CD14-positive monocyte (primary cell): ENCODE measurements at regions of chr7 and their contacts with region 1.

Region 1: GRCh38 chr7:135977007-135977741 is at the start of gene MTPN:
- DNase-seq: peak; percentile 97 to 99 (median 98)
- H3K4me3 ChIP-seq: peak within 1 kb of the TSS; percentile 63 to 99 (median 99)
- H3K4me3 Mint-ChIP-seq: peak within 1 kb of the TSS; percentile 90 to 99
- H3K27ac ChIP-seq: peak within 1 kb of the TSS; percentile 94
- H3K27ac Mint-ChIP-seq: peak within 1 kb of the TSS; percentile 93 to 97 (median 95)
- H3K4me1 ChIP-seq: peaks cover 77 to 88% of the 10 kb centered on the region in 2 donors
- H3K4me1 Mint-ChIP-seq: peaks cover 76% of the 10 kb centered on the region
- H3K27me3 ChIP-seq: no peaks in the 10 kb centered on the region
- H3K27me3 Mint-ChIP-seq: peaks cover 0 to 1% (median 1%) of the 10 kb centered on the region in 3 donors
- CTCF ChIP-seq: no peak
- polyA plus RNA-seq, gene MTPN: 73.6 to 156 (median 142) TPM

Region 2: DNA sequence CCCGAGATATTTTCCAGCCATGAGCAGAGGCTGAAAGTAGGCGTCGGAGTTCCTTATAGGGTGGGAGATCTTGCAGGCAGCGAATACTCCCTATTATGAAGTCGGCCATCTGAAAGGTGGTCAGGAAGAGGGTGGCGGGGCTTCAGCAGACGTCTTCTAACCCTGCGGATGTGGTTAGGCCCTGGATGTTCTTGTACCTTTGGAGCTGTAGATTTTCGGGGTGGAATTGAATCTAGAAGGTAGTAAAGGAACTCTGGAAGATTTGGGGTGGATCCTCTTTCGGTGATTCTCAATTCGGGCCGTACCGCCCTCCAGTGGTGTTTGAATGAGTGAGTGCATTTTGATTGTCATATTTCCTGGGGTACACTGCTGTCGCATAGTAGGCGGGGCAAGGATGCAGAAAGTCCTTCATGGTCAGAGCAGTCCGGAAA is 418.8 kb before region 1 on chr7:
- intact Hi-C with region 1: loop called in 1 of 2 experiments (anchors 5 kb)
- DNase-seq: peak; percentile 57 to 63 (median 59)
- H3K4me3 ChIP-seq: peak overlapping the region; percentile 80 to 96 (median 89)
- H3K4me3 Mint-ChIP-seq: no peak overlapping the region
- H3K27ac ChIP-seq: peak overlapping the region; percentile 84 to 98
- H3K27ac Mint-ChIP-seq: no peak overlapping the region
- H3K4me1 ChIP-seq: peaks cover 6 to 17% of the 10 kb centered on the region in 2 donors
- H3K4me1 Mint-ChIP-seq: peaks cover 25% of the 10 kb centered on the region
- H3K27me3 ChIP-seq: no peaks in the 10 kb centered on the region
- H3K27me3 Mint-ChIP-seq: no peaks in the 10 kb centered on the region
- CTCF ChIP-seq: peak; percentile 55

Region 3: DNA sequence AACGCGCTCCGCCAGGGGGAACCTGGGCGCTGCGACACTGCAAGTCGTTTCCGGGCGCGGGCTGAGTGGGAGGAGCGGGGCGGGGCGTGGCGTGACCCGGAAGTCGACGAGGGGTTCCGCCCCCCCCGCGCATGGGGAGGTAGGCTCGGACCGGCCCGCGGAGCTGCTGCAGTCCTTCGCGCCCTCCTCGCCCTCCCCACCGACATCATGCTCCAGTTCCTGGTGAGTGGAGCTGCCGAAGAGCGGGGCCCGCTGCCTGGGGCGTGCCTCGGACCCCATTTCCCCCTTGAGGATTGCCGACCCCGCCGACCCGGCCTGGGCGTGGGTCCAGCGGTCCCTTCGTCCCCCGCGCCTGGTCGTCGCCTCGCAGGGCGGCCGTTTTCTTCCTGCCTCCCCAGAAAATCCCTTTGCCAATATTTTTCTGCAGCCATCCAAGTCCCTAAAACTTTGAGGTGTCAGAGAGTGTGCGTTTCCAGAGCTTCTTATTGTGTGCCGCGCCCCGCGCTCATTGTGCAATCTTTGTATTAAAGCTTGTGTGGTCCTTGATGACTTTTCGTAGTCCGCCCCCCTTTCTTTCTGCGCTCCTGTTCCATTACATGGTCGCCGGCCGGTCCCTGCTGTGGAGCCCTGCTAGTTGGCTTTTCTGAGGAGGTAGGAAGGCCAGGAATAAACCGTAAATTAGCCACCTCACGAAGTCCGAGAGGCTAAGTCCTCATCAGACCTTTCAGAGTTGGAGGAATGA is 314.6 kb before region 1 on chr7 and contains the start of gene STMP1:
- intact Hi-C with region 1: loop called (anchors 5 to 10 kb)
- DNase-seq: peak; percentile 90 to 95 (median 93)
- H3K4me3 ChIP-seq: peak within 1 kb of the TSS; percentile 64 to 92 (median 69)
- H3K4me3 Mint-ChIP-seq: peak within 1 kb of the TSS; percentile 87 to 95
- H3K27ac ChIP-seq: peak within 1 kb of the TSS; percentile 49 to 93
- H3K27ac Mint-ChIP-seq: peak within 1 kb of the TSS; percentile 89 to 98 (median 96)
- H3K4me1 ChIP-seq: peaks cover 42 to 47% of the 10 kb centered on the region in 2 donors
- H3K4me1 Mint-ChIP-seq: peaks cover 49% of the 10 kb centered on the region
- H3K27me3 ChIP-seq: no peaks in the 10 kb centered on the region
- H3K27me3 Mint-ChIP-seq: no peaks in the 10 kb centered on the region
- CTCF ChIP-seq: no peak
- polyA plus RNA-seq, gene STMP1: 20.4 to 108 (median 88.8) TPM

Region 4: GRCh38 chr7:135771961-135772638 is 205.1 kb before region 1 on chr7:
- intact Hi-C with region 1: no loop called
- DNase-seq: no peak
- H3K4me3 ChIP-seq: no peak overlapping the region
- H3K4me3 Mint-ChIP-seq: no peak overlapping the region
- H3K27ac ChIP-seq: no peak overlapping the region
- H3K27ac Mint-ChIP-seq: peak overlapping the region in 1 of 7 donors; percentile 41
- H3K4me1 ChIP-seq: no peaks in the 10 kb centered on the region
- H3K4me1 Mint-ChIP-seq: no peaks in the 10 kb centered on the region
- H3K27me3 ChIP-seq: no peaks in the 10 kb centered on the region
- H3K27me3 Mint-ChIP-seq: peaks cover 0 to 5% (median 0%) of the 10 kb centered on the region in 3 donors
- CTCF ChIP-seq: no peak

Region 5: DNA sequence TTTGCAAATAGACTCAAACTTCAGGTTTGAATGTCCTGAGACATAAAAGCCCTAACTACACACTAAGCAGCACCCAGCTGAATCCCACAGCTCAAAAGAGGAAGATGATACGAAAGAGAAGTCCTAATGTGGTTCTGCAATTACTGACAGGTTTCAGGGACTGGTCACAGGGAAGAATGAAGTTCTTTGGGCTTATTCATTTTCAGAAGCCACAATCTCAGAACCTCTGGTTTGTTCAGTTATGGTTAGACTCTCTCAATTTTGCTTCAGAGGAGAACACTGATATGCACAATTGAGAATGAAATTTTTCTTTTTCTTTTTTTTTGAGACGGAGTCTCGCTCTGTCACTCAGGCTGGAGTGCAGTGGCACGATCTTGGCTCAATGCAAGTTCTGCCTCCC is 134.0 kb before region 1 on chr7:
- intact Hi-C with region 1: no loop called
- DNase-seq: peak in 2 of 3 donors; percentile 4 to 12
- H3K4me3 ChIP-seq: no peak overlapping the region
- H3K4me3 Mint-ChIP-seq: no peak overlapping the region
- H3K27ac ChIP-seq: no peak overlapping the region
- H3K27ac Mint-ChIP-seq: no peak overlapping the region
- H3K4me1 ChIP-seq: no peaks in the 10 kb centered on the region
- H3K4me1 Mint-ChIP-seq: peaks cover 3% of the 10 kb centered on the region
- H3K27me3 ChIP-seq: no peaks in the 10 kb centered on the region
- H3K27me3 Mint-ChIP-seq: peaks cover 0 to 4% (median 1%) of the 10 kb centered on the region in 3 donors
- CTCF ChIP-seq: no peak

Region 6: GRCh38 chr7:135929249-135929648 is 47.9 kb before region 1 on chr7:
- intact Hi-C with region 1: loop called in 1 of 2 experiments (anchors 10 kb)
- DNase-seq: no peak
- H3K4me3 ChIP-seq: no peak overlapping the region
- H3K4me3 Mint-ChIP-seq: no peak overlapping the region
- H3K27ac ChIP-seq: peak overlapping the region in 1 of 2 donors; percentile 27
- H3K27ac Mint-ChIP-seq: peak overlapping the region in 1 of 7 donors; percentile 75
- H3K4me1 ChIP-seq: peaks cover 11 to 13% of the 10 kb centered on the region in 2 donors
- H3K4me1 Mint-ChIP-seq: peaks cover 28% of the 10 kb centered on the region
- H3K27me3 ChIP-seq: no peaks in the 10 kb centered on the region
- H3K27me3 Mint-ChIP-seq: peaks cover 0 to 1% (median 0%) of the 10 kb centered on the region in 3 donors
- CTCF ChIP-seq: no peak

Region 7: GRCh38 chr7:135942614-135943013 is 34.6 kb before region 1 on chr7:
- intact Hi-C with region 1: loop called in 1 of 2 experiments (anchors 5 kb)
- DNase-seq: no peak
- H3K4me3 ChIP-seq: no peak overlapping the region
- H3K4me3 Mint-ChIP-seq: no peak overlapping the region
- H3K27ac ChIP-seq: no peak overlapping the region
- H3K27ac Mint-ChIP-seq: no peak overlapping the region
- H3K4me1 ChIP-seq: no peaks in the 10 kb centered on the region
- H3K4me1 Mint-ChIP-seq: peaks cover 5% of the 10 kb centered on the region
- H3K27me3 ChIP-seq: no peaks in the 10 kb centered on the region
- H3K27me3 Mint-ChIP-seq: no peaks in the 10 kb centered on the region
- CTCF ChIP-seq: no peak

Region 8: GRCh38 chr7:136016649-136017395 is 39.6 kb after region 1 on chr7:
- intact Hi-C with region 1: no loop called
- DNase-seq: no peak
- H3K4me3 ChIP-seq: no peak overlapping the region
- H3K4me3 Mint-ChIP-seq: no peak overlapping the region
- H3K27ac ChIP-seq: no peak overlapping the region
- H3K27ac Mint-ChIP-seq: peak overlapping the region in 1 of 7 donors; percentile 1
- H3K4me1 ChIP-seq: no peaks in the 10 kb centered on the region
- H3K4me1 Mint-ChIP-seq: peaks cover 4% of the 10 kb centered on the region
- H3K27me3 ChIP-seq: peaks cover 3 to 7% of the 10 kb centered on the region in 2 donors
- H3K27me3 Mint-ChIP-seq: peaks cover 4 to 21% (median 9%) of the 10 kb centered on the region in 3 donors
- CTCF ChIP-seq: no peak

Region 9: DNA sequence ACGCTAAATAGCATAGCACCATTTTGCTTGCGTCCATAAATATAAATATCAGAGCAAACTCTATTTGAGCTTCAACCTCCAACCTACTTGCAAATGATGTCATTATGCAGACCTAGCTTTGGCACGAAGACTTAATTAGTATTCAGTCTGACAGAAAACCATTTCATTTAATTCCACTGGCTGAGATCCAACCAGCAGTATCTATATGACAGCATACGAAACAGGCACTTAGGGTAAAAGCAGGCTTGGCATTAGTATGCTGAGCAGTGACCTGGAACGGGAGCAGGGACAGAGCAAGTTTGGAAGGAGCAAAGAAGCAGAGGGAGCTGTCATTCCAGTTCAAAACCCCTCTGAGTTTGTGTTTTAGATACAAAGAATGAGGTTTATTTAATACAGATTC is 578.8 kb after region 1 on chr7:
- intact Hi-C with region 1: no loop called
- DNase-seq: no peak
- H3K4me3 ChIP-seq: no peak overlapping the region
- H3K4me3 Mint-ChIP-seq: no peak overlapping the region
- H3K27ac ChIP-seq: no peak overlapping the region
- H3K27ac Mint-ChIP-seq: no peak overlapping the region
- H3K4me1 ChIP-seq: no peaks in the 10 kb centered on the region
- H3K4me1 Mint-ChIP-seq: no peaks in the 10 kb centered on the region
- H3K27me3 ChIP-seq: no peaks in the 10 kb centered on the region
- H3K27me3 Mint-ChIP-seq: peaks cover 0 to 1% (median 0%) of the 10 kb centered on the region in 3 donors
- CTCF ChIP-seq: no peak